HCT116 (cell line): ENCODE measurements at regions of chr2 and their contacts with region 1.

Region 1: GRCh38 chr2:70340921-70341765 is 39.3 kb upstream of the FAM136A start:
- DNase-seq: peak; percentile 59
- ATAC-seq: peak; percentile 97
- H3K4me3 ChIP-seq: no peak overlapping the region
- H3K27ac ChIP-seq: no peak overlapping the region
- H3K4me1 ChIP-seq: peaks cover 0 to 16% of the 10 kb centered on the region in 2 experiments; a peak in 2 of 4 replicates
- H3K27me3 ChIP-seq: no peaks in the 10 kb centered on the region
- CTCF ChIP-seq: peak; percentile 78 to 94 (median 92)
- POLR2A ChIP-seq: no peak
- RAD21 ChIP-seq: peak; percentile 97

Region 2: GRCh38 chr2:70142590-70143313 is 198.4 kb before region 1 on chr2:
- CTCF ChIA-PET with region 1: no interaction called
- POLR2A ChIA-PET with region 1: no interaction called
- RAD21 ChIA-PET with region 1: no interaction called
- intact Hi-C with region 1: no loop called
- DNase-seq: peak; percentile 98
- ATAC-seq: peak; percentile 74
- H3K4me3 ChIP-seq: peak overlapping the region; percentile 40 to 63
- H3K27ac ChIP-seq: peak overlapping the region; percentile 99
- H3K4me1 ChIP-seq: peaks cover 35 to 51% of the 10 kb centered on the region in 2 experiments
- H3K27me3 ChIP-seq: no peaks in the 10 kb centered on the region
- CTCF ChIP-seq: peak in 2 of 3 experiments; percentile 83 to 88; a peak in 4 of 6 replicates
- POLR2A ChIP-seq: peak; percentile 31
- RAD21 ChIP-seq: no peak

Region 3: DNA sequence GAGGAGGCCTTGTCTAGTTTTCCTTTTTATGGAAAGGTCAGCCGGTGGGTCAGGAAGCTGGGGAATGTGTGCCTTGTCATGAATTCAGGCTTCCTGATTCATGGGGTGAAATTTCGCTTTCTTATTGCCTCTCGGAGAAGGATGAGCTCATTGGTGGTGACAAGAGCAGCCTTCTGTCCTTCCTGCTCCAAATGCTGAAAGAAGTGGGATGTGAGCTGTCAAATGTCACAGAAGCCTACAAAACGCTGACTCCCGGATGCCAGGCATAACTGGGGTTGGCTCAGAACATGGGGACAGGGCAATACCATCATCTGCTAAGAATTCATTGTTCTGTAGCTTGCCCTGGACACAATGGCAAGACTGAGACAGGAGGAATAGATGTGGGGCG is 16.5 kb after region 1 on chr2:
- CTCF ChIA-PET with region 1: no interaction called
- POLR2A ChIA-PET with region 1: no interaction called
- RAD21 ChIA-PET with region 1: no interaction called
- intact Hi-C with region 1: no loop called
- DNase-seq: no peak
- ATAC-seq: no peak
- H3K4me3 ChIP-seq: no peak overlapping the region
- H3K27ac ChIP-seq: no peak overlapping the region
- H3K4me1 ChIP-seq: peaks cover 4 to 29% of the 10 kb centered on the region in 2 experiments
- H3K27me3 ChIP-seq: no peaks in the 10 kb centered on the region
- CTCF ChIP-seq: no peak
- POLR2A ChIP-seq: no peak
- RAD21 ChIP-seq: no peak

Region 4: GRCh38 chr2:70553584-70554337 is 212.6 kb after region 1 on chr2 and contains the start of gene TGFA:
- CTCF ChIA-PET with region 1: no interaction called
- POLR2A ChIA-PET with region 1: no interaction called
- RAD21 ChIA-PET with region 1: no interaction called
- intact Hi-C with region 1: loop called (anchors 5 kb)
- DNase-seq: peak; percentile 89
- ATAC-seq: peak; percentile 87
- H3K4me3 ChIP-seq: peak within 1 kb of the TSS; percentile 92 to 95
- H3K27ac ChIP-seq: peak within 1 kb of the TSS; percentile 94
- H3K4me1 ChIP-seq: peaks cover 18 to 25% of the 10 kb centered on the region in 2 experiments
- H3K27me3 ChIP-seq: no peaks in the 10 kb centered on the region
- CTCF ChIP-seq: peak; percentile 73 to 92 (median 76)
- POLR2A ChIP-seq: peak; percentile 5
- RAD21 ChIP-seq: peak; percentile 85
- total RNA-seq, gene TGFA: 50.1 TPM

Region 5: DNA sequence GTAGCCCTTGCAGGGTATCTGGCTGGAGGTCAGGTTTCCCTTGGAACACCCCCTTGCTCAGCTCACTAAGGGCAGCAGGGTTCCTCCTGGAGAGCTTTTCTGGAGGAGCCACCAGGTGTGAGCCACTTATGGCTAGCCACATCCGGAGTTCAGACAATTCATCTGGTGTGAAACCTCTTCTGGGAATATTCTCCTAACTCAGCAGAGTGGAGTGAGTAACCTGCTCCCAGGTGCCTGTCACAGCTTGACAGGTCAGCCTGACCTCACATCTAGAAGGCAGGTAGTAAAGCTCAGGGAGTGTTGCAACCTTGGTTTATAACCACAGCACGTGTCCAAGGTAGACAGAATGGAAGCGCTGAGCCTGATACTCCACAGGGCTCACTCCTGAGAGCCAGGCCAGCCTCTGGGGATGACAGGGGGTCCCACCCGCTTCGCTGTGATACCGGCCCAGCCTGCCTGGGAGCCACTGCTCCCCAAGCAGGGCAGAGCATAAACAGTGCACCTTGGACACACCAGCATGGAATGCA is 275.1 kb after region 1 on chr2:
- CTCF ChIA-PET with region 1: interaction called, 27 read pairs
- POLR2A ChIA-PET with region 1: interaction called, 3 read pairs
- RAD21 ChIA-PET with region 1: interaction called, 7 read pairs
- intact Hi-C with region 1: loop called (anchors 1 kb)
- DNase-seq: no peak
- ATAC-seq: no peak
- H3K4me3 ChIP-seq: no peak overlapping the region
- H3K27ac ChIP-seq: no peak overlapping the region
- H3K4me1 ChIP-seq: peaks cover 0 to 2% of the 10 kb centered on the region in 2 experiments; a peak in 1 of 4 replicates
- H3K27me3 ChIP-seq: no peaks in the 10 kb centered on the region
- CTCF ChIP-seq: no peak
- POLR2A ChIP-seq: no peak
- RAD21 ChIP-seq: no peak

Region 6: GRCh38 chr2:70647873-70648481 is 306.8 kb after region 1 on chr2:
- CTCF ChIA-PET with region 1: interaction called, 7 read pairs
- POLR2A ChIA-PET with region 1: no interaction called
- RAD21 ChIA-PET with region 1: no interaction called
- intact Hi-C with region 1: loop called (anchors 1 kb)
- DNase-seq: peak; percentile 55
- ATAC-seq: peak; percentile 87
- H3K4me3 ChIP-seq: no peak overlapping the region
- H3K27ac ChIP-seq: no peak overlapping the region
- H3K4me1 ChIP-seq: peaks cover 0 to 3% of the 10 kb centered on the region in 2 experiments; a peak in 1 of 4 replicates
- H3K27me3 ChIP-seq: no peaks in the 10 kb centered on the region
- CTCF ChIP-seq: peak; percentile 95 to 99 (median 99)
- POLR2A ChIP-seq: no peak
- RAD21 ChIP-seq: peak; percentile 99